ENCODE measurements at regions of chr6 and their contacts with region 1.

Region 1: GRCh38 chr6:16238963-16239797 is 793 bp downstream of the GMPR start:
- DNase-seq: peak in 1 of 5 donors; percentile 5
- H3K4me3 ChIP-seq: peak overlapping the region; percentile 73
- H3K4me3 Mint-ChIP-seq: peak overlapping the region; percentile 84 to 96 (median 93)
- H3K27ac ChIP-seq: peak overlapping the region; percentile 79
- H3K27ac Mint-ChIP-seq: peak overlapping the region in 5 of 8 donors; percentile 66 to 88 (median 69)
- H3K4me1 ChIP-seq: peaks cover 25% of the 10 kb centered on the region
- H3K4me1 Mint-ChIP-seq: peaks cover 17 to 30% (median 24%) of the 10 kb centered on the region in 3 donors
- H3K27me3 ChIP-seq: no peaks in the 10 kb centered on the region
- H3K27me3 Mint-ChIP-seq: peaks cover 15 to 29% of the 10 kb centered on the region in 2 donors

Region 2: GRCh38 chr6:16222826-16223225 is 16.4 kb before region 1 on chr6:
- CTCF ChIA-PET with region 1: interaction called, 4 read pairs
- POLR2A ChIA-PET with region 1: interaction called, 10 read pairs
- DNase-seq: no peak
- H3K4me3 ChIP-seq: no peak overlapping the region
- H3K4me3 Mint-ChIP-seq: no peak overlapping the region
- H3K27ac ChIP-seq: no peak overlapping the region
- H3K27ac Mint-ChIP-seq: no peak overlapping the region
- H3K4me1 ChIP-seq: no peaks in the 10 kb centered on the region
- H3K4me1 Mint-ChIP-seq: no peaks in the 10 kb centered on the region
- H3K27me3 ChIP-seq: no peaks in the 10 kb centered on the region
- H3K27me3 Mint-ChIP-seq: peaks cover 4 to 34% of the 10 kb centered on the region in 2 donors

Measured in CD8-positive, alpha-beta memory T cell (primary cell).